PC-3 (cell line): ENCODE measurements at regions of chr3 and their contacts with region 1.

Region 1: GRCh38 chr3:98986073-98986472 is 84.6 kb upstream of the DCBLD2 start:
- DNase-seq: peak; percentile 53
- ATAC-seq: no peak
- H3K4me3 ChIP-seq: no peak overlapping the region
- H3K27ac ChIP-seq: peak overlapping the region; percentile 65
- H3K4me1 ChIP-seq: peaks cover 52% of the 10 kb centered on the region
- H3K27me3 ChIP-seq: no peaks in the 10 kb centered on the region
- CTCF ChIP-seq: no peak

Region 2: DNA sequence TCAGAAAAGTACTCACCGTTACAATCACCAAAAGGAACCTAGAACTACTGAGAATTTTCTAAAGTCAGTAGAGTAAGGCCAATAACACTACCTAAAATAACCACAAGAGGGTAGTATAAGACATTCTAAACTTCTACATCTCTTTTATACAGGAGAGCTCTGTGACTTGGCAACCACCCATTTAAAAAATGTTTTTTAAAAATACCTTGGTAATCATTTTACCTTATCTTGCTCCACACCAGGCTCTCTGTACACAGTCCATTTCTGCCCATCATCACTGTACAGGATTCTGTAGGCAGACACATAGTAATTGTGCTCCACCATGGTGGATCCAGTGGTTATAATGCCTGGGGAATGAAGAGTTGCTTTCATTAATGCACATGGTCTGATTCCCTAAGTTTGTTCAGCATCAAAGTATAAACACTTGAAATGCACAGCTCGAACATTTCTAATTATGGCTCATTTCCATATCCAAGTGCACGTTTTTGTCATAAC is 168.5 kb before region 1 on chr3:
- CTCF ChIA-PET with region 1: interaction called, 6 read pairs
- POLR2A ChIA-PET with region 1: interaction called, 5 read pairs
- intact Hi-C with region 1: loop called (anchors 1 kb)
- DNase-seq: peak; percentile 89
- ATAC-seq: peak; percentile 42
- H3K4me3 ChIP-seq: no peak overlapping the region
- H3K27ac ChIP-seq: peak overlapping the region; percentile 21
- H3K4me1 ChIP-seq: peaks cover 31% of the 10 kb centered on the region
- H3K27me3 ChIP-seq: no peaks in the 10 kb centered on the region
- CTCF ChIP-seq: peak; percentile 84

Region 3: DNA sequence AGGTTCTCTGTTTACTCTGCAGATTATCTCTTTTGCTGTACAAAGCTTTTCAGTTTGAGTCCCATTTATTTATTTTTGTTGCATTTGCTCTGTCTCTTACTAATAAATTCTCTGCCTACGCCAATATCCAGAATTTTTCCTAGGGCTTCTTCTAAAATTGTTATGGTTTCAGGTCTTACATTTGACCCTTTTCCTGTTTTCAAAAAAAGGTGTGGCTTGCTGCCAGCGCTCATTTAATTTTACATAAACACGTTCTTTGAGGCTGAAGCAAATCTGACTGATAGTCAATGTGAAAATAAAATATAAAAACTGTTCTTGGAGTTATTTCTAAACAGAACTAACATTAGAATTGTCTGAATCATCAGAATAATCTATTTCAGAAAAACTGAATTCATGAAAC is 116.7 kb before region 1 on chr3:
- CTCF ChIA-PET with region 1: no interaction called
- POLR2A ChIA-PET with region 1: no interaction called
- intact Hi-C with region 1: no loop called
- DNase-seq: no peak
- ATAC-seq: no peak
- H3K4me3 ChIP-seq: no peak overlapping the region
- H3K27ac ChIP-seq: no peak overlapping the region
- H3K4me1 ChIP-seq: no peaks in the 10 kb centered on the region
- H3K27me3 ChIP-seq: no peaks in the 10 kb centered on the region
- CTCF ChIP-seq: no peak

Region 4: DNA sequence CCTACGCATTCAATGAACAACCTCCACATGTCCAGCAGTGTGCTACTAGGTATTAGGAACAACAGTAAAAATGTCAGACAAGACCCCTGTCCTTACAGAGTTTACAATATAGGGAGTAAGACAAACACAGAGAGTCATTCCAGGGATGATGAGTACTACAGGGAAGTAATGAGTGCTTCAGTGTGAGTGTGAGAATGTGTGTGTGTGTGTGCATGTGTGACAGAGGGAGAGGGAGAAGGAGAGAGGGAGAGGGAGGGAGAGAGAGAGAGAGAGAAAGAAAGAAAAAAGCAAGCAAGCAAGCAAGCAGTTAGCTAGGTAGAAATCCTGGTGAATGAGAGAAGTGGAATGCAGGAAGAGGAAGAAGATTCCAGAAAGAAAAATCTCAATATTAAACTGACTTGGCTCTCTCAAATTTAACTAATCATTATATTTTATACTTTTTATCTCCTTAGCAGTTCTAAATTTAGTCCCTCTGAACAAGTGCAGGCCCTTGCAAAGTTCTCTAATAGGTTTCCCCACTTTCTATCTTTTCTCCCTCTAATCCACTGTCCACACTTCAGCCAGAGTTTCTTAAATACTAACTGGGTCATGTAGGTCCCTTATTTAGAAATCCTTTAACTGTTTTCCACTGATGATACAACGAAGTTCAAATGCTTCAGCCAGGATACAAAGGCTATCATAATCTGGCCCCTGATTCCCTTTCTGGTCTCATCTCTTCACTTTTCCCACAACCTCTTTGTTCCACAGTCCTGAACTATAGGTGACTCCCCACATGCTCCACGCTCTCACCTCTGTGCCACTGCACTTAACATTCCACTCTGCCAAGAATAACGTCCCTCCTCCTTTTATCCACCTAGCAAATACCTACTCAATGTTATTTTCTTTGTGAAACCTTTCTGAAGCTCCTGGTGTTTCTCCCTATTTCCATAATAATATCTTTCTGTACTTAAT is 94.8 kb before region 1 on chr3:
- CTCF ChIA-PET with region 1: interaction called, 4 read pairs
- POLR2A ChIA-PET with region 1: interaction called, 12 read pairs
- intact Hi-C with region 1: no loop called
- DNase-seq: no peak
- ATAC-seq: peak; percentile 12
- H3K4me3 ChIP-seq: 0 out of 2 replicates have a peak overlapping the region, but pooled peaks have one; percentile 20
- H3K27ac ChIP-seq: peak overlapping the region; percentile 13
- H3K4me1 ChIP-seq: peaks cover 99% of the 10 kb centered on the region
- H3K27me3 ChIP-seq: no peaks in the 10 kb centered on the region
- CTCF ChIP-seq: no peak

Region 5: DNA sequence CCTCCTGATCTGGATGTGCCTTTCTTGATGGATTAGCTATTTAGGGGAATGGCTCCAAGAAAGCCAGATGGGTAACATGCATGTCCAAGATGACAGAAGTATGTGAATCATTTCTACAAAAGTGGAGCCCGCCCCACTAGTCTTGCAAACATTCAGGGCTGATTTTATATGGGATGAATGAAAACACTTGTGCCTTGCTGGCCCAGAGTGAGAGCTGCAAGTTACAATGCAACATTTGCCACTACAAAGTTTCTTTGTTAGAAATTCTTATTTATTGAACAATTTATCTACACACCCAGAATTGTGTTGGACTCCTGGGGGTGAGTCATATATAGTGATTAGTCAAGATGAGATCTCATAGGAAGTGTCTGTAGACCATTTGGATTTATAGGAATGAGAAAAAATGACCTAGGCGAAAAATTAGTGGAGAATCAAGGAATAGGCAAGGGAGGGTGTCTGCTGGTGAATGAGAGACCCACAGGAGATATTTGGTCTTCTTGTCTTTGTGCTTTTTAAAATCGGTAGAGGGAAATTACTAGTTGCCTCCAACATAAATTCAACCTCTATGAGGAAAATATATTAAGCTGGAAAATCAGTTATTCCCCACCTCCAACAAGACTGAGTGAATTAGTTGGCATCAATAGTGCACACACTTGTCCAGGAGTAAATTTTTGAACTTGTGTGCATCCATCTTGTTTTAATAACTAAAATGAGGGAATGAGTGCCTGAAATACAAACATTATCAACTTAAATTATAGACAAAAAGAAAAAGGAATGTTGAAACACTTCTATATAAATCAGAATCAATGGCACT is 31.1 kb before region 1 on chr3:
- CTCF ChIA-PET with region 1: no interaction called
- POLR2A ChIA-PET with region 1: no interaction called
- intact Hi-C with region 1: loop called (anchors 2 kb)
- DNase-seq: peak; percentile 87
- ATAC-seq: peak; percentile 86
- H3K4me3 ChIP-seq: no peak overlapping the region
- H3K27ac ChIP-seq: peak overlapping the region; percentile 81
- H3K4me1 ChIP-seq: peaks cover 36% of the 10 kb centered on the region
- H3K27me3 ChIP-seq: no peaks in the 10 kb centered on the region
- CTCF ChIP-seq: no peak

Region 6: GRCh38 chr3:99246010-99246654 is 260.1 kb after region 1 on chr3:
- CTCF ChIA-PET with region 1: no interaction called
- POLR2A ChIA-PET with region 1: no interaction called
- intact Hi-C with region 1: no loop called
- DNase-seq: peak; percentile 80
- ATAC-seq: peak; percentile 74
- H3K4me3 ChIP-seq: no peak overlapping the region
- H3K27ac ChIP-seq: no peak overlapping the region
- H3K4me1 ChIP-seq: peaks cover 66% of the 10 kb centered on the region
- H3K27me3 ChIP-seq: no peaks in the 10 kb centered on the region
- CTCF ChIP-seq: no peak